Activated B cell treated with CpG ODN at 0.5 μM for 24 hours (primary cell): ENCODE measurements at regions of chr16 and their contacts with region 1.

Region 1: GRCh38 chr16:57377080-57377841 is 5.0 kb downstream of the CX3CL1 start:
- DNase-seq: peak; percentile 46
- ATAC-seq: peak; percentile 82
- H3K4me3 Mint-ChIP-seq: peak overlapping the region; percentile 29
- H3K27ac Mint-ChIP-seq: peak overlapping the region; percentile 86
- H3K4me1 Mint-ChIP-seq: peaks cover 43% of the 10 kb centered on the region
- H3K27me3 Mint-ChIP-seq: no peaks in the 10 kb centered on the region
- CTCF ChIP-seq: no peak

Region 2: DNA sequence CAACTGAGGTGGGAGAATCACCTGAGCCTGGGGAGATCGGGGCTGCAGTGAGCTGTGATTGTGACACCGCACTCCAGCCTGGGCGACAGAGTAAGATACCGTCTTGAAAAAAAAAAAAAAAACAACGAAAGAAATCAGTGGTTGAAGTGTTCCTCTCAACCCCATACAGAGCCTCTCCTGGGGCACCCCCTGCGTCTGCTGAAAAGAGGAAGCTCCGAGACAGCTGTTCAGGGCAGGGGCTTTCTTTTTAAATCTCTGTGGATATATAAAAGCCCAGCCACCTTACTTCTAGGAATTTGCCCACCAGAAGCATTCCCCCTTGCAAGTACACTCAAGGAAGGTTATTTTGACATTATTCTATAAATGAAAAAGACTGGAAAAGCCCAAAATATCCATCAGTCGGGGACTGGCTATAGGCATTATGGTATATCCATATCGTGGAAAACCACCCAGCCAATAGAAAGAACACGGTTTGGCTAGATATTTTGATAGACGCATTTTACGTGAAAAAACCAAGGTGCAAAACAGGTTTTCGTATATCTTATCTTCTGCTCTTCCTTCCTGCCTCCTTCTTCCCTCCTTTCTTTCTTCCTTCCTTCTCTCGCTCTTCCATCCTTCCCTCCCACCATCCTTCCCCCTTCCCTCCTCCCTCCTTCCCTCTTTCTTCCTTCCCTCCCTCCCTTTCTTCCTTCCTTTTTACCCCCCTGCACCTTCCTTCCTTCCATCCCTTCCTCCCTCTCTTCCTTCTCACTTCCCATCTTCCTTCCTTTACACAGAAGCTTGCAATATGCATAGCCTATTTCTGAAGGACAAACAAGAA is 27.8 kb before region 1 on chr16:
- CTCF ChIA-PET with region 1: no interaction called
- POLR2A ChIA-PET with region 1: interaction called, 9 read pairs
- intact Hi-C with region 1: loop called (anchors 2 kb)
- DNase-seq: peak; percentile 51
- ATAC-seq: peak; percentile 99
- H3K4me3 Mint-ChIP-seq: peak overlapping the region; percentile 62
- H3K27ac Mint-ChIP-seq: peak overlapping the region; percentile 31
- H3K4me1 Mint-ChIP-seq: peaks cover 43% of the 10 kb centered on the region
- H3K27me3 Mint-ChIP-seq: peaks cover 8% of the 10 kb centered on the region
- CTCF ChIP-seq: no peak

Region 3: GRCh38 chr16:57358527-57359095 is 18.6 kb before region 1 on chr16 and contains the start of gene CCL22:
- CTCF ChIA-PET with region 1: interaction called, 3 read pairs
- POLR2A ChIA-PET with region 1: interaction called, 8 read pairs
- intact Hi-C with region 1: loop called (anchors 1 kb)
- DNase-seq: peak; percentile 36
- ATAC-seq: peak; percentile 84
- H3K4me3 Mint-ChIP-seq: peak within 1 kb of the TSS; percentile 85
- H3K27ac Mint-ChIP-seq: peak within 1 kb of the TSS; percentile 82
- H3K4me1 Mint-ChIP-seq: peaks cover 32% of the 10 kb centered on the region
- H3K27me3 Mint-ChIP-seq: no peaks in the 10 kb centered on the region
- CTCF ChIP-seq: no peak
- total RNA-seq, gene CCL22: 276 and 288 TPM in 2 replicates